ENCODE measurements at regions of chr4 and their contacts with region 1.

Region 1: GRCh38 chr4:22515145-22515887 is 550 bp downstream of the ADGRA3 start:
- DNase-seq: peak; percentile 74
- H3K4me3 ChIP-seq: peak overlapping the region; percentile 69 to 70 (median 70)
- H3K27ac ChIP-seq: peak overlapping the region; percentile 87
- H3K4me1 ChIP-seq: peaks cover 15% of the 10 kb centered on the region
- H3K27me3 ChIP-seq: no peaks in the 10 kb centered on the region
- CTCF ChIP-seq: no peak

Region 2: GRCh38 chr4:22416403-22416802 is 98.9 kb before region 1 on chr4:
- CTCF ChIA-PET with region 1: no interaction called
- dilution Hi-C with region 1: no loop called
- in situ Hi-C with region 1: no loop called
- intact Hi-C with region 1: loop called (anchors 5 kb)
- DNase-seq: no peak
- H3K4me3 ChIP-seq: no peak overlapping the region
- H3K27ac ChIP-seq: no peak overlapping the region
- H3K4me1 ChIP-seq: no peaks in the 10 kb centered on the region
- H3K27me3 ChIP-seq: no peaks in the 10 kb centered on the region
- CTCF ChIP-seq: no peak

Region 3: GRCh38 chr4:22454955-22455354 is 60.4 kb before region 1 on chr4:
- CTCF ChIA-PET with region 1: no interaction called
- dilution Hi-C with region 1: no loop called
- in situ Hi-C with region 1: no loop called
- intact Hi-C with region 1: loop called (anchors 5 kb)
- DNase-seq: no peak
- H3K4me3 ChIP-seq: no peak overlapping the region
- H3K27ac ChIP-seq: no peak overlapping the region
- H3K4me1 ChIP-seq: no peaks in the 10 kb centered on the region
- H3K27me3 ChIP-seq: no peaks in the 10 kb centered on the region
- CTCF ChIP-seq: no peak

Region 4: GRCh38 chr4:22473268-22473667 is 42.0 kb before region 1 on chr4:
- CTCF ChIA-PET with region 1: no interaction called
- dilution Hi-C with region 1: no loop called
- in situ Hi-C with region 1: no loop called
- intact Hi-C with region 1: loop called (anchors 1 kb)
- DNase-seq: peak; percentile 80
- H3K4me3 ChIP-seq: no peak overlapping the region
- H3K27ac ChIP-seq: peak overlapping the region; percentile 65
- H3K4me1 ChIP-seq: peaks cover 44% of the 10 kb centered on the region
- H3K27me3 ChIP-seq: no peaks in the 10 kb centered on the region
- CTCF ChIP-seq: no peak

Region 5: DNA sequence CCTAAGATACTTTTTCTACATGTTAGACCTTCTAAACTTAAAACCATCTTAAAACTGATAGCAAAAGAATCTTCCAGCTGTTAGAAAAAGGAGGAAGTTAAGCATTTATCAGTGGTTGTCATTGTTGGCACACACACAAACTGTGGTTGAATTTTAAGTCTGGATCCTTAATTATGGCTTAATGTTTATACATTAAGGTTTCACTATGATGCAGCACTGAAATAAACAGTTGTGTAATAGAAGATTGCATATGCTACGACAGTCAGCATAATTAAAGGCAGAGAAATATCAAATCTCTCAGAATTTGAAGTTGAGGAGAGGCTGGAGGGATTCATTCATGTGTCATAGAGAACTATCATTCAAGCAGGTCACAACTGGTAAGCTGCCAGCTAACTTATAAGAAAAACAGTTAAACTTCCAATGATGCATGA is 31.8 kb before region 1 on chr4:
- CTCF ChIA-PET with region 1: no interaction called
- dilution Hi-C with region 1: no loop called
- in situ Hi-C with region 1: no loop called
- intact Hi-C with region 1: loop called (anchors 1 kb)
- DNase-seq: peak; percentile 82
- H3K4me3 ChIP-seq: no peak overlapping the region
- H3K27ac ChIP-seq: peak overlapping the region; percentile 89
- H3K4me1 ChIP-seq: peaks cover 56% of the 10 kb centered on the region
- H3K27me3 ChIP-seq: no peaks in the 10 kb centered on the region
- CTCF ChIP-seq: no peak

Region 6: GRCh38 chr4:22607382-22607781 is 92.1 kb after region 1 on chr4:
- CTCF ChIA-PET with region 1: no interaction called
- dilution Hi-C with region 1: loop called (anchors 5 kb)
- in situ Hi-C with region 1: no loop called
- intact Hi-C with region 1: loop called (anchors 5 kb)
- DNase-seq: peak; percentile 35
- H3K4me3 ChIP-seq: no peak overlapping the region
- H3K27ac ChIP-seq: no peak overlapping the region
- H3K4me1 ChIP-seq: no peaks in the 10 kb centered on the region
- H3K27me3 ChIP-seq: no peaks in the 10 kb centered on the region
- CTCF ChIP-seq: peak; percentile 68 to 89

Region 7: DNA sequence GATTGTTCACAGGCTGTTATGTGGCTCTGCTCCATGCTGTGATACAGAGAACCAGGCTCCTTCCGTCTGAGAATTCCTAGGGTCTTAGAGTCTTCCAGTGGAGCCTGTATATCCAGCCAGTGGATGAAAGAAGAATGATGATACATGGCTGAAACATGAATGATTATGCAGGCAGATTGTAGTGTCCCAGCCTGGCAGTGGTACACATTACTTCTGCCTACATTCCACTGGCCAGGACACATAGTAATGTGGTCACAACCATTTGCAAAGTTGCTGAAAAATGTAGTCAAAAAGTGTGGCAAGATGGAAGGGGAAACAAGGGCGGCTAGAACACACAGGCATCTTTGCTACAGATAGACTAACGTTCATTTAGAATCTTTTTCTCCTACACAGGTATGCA is 172.9 kb after region 1 on chr4:
- CTCF ChIA-PET with region 1: no interaction called
- dilution Hi-C with region 1: no loop called
- in situ Hi-C with region 1: no loop called
- intact Hi-C with region 1: loop called (anchors 5 kb)
- DNase-seq: peak; percentile 43
- H3K4me3 ChIP-seq: no peak overlapping the region
- H3K27ac ChIP-seq: no peak overlapping the region
- H3K4me1 ChIP-seq: peaks cover 5% of the 10 kb centered on the region
- H3K27me3 ChIP-seq: no peaks in the 10 kb centered on the region
- CTCF ChIP-seq: no peak

Measured in mammary epithelial cell (primary cell).